ENCODE measurements at regions of chr16 and their contacts with region 1.

Region 1: GRCh38 chr16:57284208-57284951 is at the start of gene PLLP:
- DNase-seq: no peak
- H3K4me3 ChIP-seq: peak within 1 kb of the TSS; percentile 50 to 53
- H3K27ac ChIP-seq: peak within 1 kb of the TSS in 1 of 2 donors; percentile 37
- H3K4me1 ChIP-seq: no peaks in the 10 kb centered on the region
- H3K27me3 ChIP-seq: no peaks in the 10 kb centered on the region
- CTCF ChIP-seq: peak in 1 of 4 experiments; percentile 7
- POLR2A ChIP-seq: peak; percentile 59
- total RNA-seq, gene PLLP: 28.6 to 52.5 TPM

Region 2: GRCh38 chr16:57244767-57245471 is 39.5 kb before region 1 on chr16 and contains the start of gene ARL2BP:
- intact Hi-C with region 1: loop called (anchors 5 kb)
- DNase-seq: peak; percentile 98
- H3K4me3 ChIP-seq: peak within 1 kb of the TSS; percentile 73
- H3K27ac ChIP-seq: peak within 1 kb of the TSS; percentile 82 to 90
- H3K4me1 ChIP-seq: no peaks in the 10 kb centered on the region
- H3K27me3 ChIP-seq: no peaks in the 10 kb centered on the region
- CTCF ChIP-seq: peak in 2 of 4 experiments; percentile 3 to 8
- POLR2A ChIP-seq: peak; percentile 89
- total RNA-seq, gene ARL2BP: 62.3 to 81.4 TPM

Measured in prostate gland (tissue), 2 donors.